Activated CD4-positive, alpha-beta memory T cell treated with anti-CD3 and anti-CD28 coated beads for 36 hours (primary cell): ENCODE measurements at regions of chr6 and their contacts with region 1.

Region 1: GRCh38 chr6:116969211-116969863 is 92.3 kb downstream of the RFX6 start:
- DNase-seq: no peak
- H3K4me3 Mint-ChIP-seq: no peak overlapping the region
- H3K27ac Mint-ChIP-seq: no peak overlapping the region
- H3K4me1 Mint-ChIP-seq: no peaks in the 10 kb centered on the region
- H3K27me3 Mint-ChIP-seq: peaks cover 3% of the 10 kb centered on the region

Region 2: GRCh38 chr6:116615937-116616736 is 353.2 kb before region 1 on chr6 and contains the start of gene RSPH4A:
- CTCF ChIA-PET with region 1: no interaction called
- POLR2A ChIA-PET with region 1: no interaction called
- intact Hi-C with region 1: loop called (anchors 5 kb)
- DNase-seq: peak; percentile 85
- H3K4me3 Mint-ChIP-seq: peak within 1 kb of the TSS; percentile 82
- H3K27ac Mint-ChIP-seq: no peak within 1 kb of the TSS
- H3K4me1 Mint-ChIP-seq: peaks cover 17% of the 10 kb centered on the region
- H3K27me3 Mint-ChIP-seq: no peaks in the 10 kb centered on the region
- total RNA-seq, gene RSPH4A: not detected

Region 3: DNA sequence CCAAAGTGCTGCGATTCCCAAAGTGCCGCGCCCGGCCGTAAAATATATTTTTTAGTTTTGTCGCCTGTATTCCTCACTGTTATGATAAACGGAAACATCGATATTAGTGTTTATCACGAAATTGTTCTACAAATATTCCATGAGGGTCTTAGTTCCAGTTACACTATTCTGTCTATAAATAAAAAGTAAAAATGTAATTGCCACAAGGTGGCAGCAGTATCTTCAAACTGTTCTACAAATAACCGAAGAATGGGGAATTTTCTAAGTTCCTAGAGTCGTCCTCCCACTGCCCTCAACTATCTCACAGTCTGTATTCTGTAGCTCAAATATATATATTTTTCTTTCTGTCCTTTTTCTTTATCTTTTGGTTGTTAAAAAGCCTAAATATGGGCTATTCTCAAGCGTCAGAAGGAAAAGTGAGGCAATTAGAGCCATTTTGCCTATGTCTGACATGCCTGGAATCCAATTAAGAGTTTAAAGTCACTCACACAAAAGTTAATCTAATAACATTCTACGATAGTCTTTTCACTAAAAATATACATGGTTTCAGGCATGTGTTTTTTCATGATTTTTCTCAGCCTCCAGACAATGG is 189.7 kb before region 1 on chr6:
- CTCF ChIA-PET with region 1: no interaction called
- POLR2A ChIA-PET with region 1: no interaction called
- intact Hi-C with region 1: loop called (anchors 1 kb)
- DNase-seq: no peak
- H3K4me3 Mint-ChIP-seq: no peak overlapping the region
- H3K27ac Mint-ChIP-seq: no peak overlapping the region
- H3K4me1 Mint-ChIP-seq: no peaks in the 10 kb centered on the region
- H3K27me3 Mint-ChIP-seq: peaks cover 8% of the 10 kb centered on the region

Region 4: GRCh38 chr6:117317261-117317660 is 347.9 kb after region 1 on chr6:
- CTCF ChIA-PET with region 1: no interaction called
- POLR2A ChIA-PET with region 1: no interaction called
- intact Hi-C with region 1: loop called (anchors 5 kb)
- DNase-seq: no peak
- H3K4me3 Mint-ChIP-seq: no peak overlapping the region
- H3K27ac Mint-ChIP-seq: no peak overlapping the region
- H3K4me1 Mint-ChIP-seq: no peaks in the 10 kb centered on the region
- H3K27me3 Mint-ChIP-seq: no peaks in the 10 kb centered on the region

Region 5: DNA sequence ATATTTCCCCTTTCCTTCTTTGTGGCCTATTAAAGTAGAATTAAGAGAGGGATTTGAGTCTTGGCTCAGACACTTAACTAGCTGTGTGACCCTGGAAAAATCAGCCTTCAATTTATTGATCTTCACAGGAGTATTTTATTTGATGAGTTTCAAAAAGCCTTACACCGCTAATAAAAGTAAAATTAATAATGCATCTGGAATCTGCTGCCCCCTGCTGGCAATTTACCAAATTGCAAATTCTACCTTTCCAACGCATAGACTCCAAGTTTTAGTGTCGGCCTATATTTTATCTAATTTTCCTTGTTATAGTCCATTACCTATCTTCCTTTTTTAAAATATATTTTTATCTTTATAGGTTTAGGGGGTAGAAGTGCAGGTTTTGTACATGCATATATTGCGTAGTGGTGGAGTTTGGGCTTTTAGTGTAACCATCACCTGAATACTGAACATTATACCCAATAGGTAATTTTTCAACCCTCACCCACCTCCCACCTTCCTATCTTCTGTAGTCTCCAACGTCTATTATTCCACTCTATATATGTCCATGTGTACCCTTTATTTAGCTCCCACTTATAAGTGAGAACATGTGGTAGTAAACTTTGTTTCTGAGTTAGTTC is 586.7 kb after region 1 on chr6:
- CTCF ChIA-PET with region 1: no interaction called
- POLR2A ChIA-PET with region 1: no interaction called
- intact Hi-C with region 1: loop called (anchors 10 kb)
- DNase-seq: peak; percentile 57
- H3K4me3 Mint-ChIP-seq: no peak overlapping the region
- H3K27ac Mint-ChIP-seq: no peak overlapping the region
- H3K4me1 Mint-ChIP-seq: peaks cover 2% of the 10 kb centered on the region
- H3K27me3 Mint-ChIP-seq: no peaks in the 10 kb centered on the region